A673 (cell line): ENCODE measurements at regions of chr15 and their contacts with region 1.

Region 1: DNA sequence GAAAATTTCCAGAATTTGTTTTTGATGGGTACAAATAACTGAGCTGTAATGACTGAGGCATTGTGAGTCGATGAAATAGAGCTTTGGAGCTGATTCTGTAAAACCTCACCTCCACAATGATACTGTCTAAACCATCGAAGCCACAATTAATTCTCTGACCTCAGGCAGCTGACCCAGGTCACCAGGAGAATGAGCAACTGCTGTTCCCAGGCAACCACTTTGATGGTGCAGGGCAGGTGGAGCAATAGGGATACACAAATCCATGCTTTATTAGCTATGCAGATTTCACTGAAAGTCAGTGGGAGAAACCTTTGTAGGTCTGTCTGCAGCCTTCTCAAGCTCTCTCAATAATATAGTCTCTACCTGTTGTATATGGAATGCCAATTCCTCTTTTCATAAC is 204.4 kb downstream of the RYR3 start:
- DNase-seq: no peak
- H3K4me3 ChIP-seq: no peak overlapping the region
- H3K27ac ChIP-seq: no peak overlapping the region
- H3K4me1 ChIP-seq: no peaks in the 10 kb centered on the region
- H3K27me3 ChIP-seq: peaks cover 50% of the 10 kb centered on the region
- CTCF ChIP-seq: no peak

Region 2: GRCh38 chr15:33467816-33468163 is 47.3 kb before region 1 on chr15:
- CTCF ChIA-PET with region 1: no interaction called
- POLR2A ChIA-PET with region 1: no interaction called
- intact Hi-C with region 1: loop called (anchors 5 kb)
- DNase-seq: no peak
- H3K4me3 ChIP-seq: no peak overlapping the region
- H3K27ac ChIP-seq: no peak overlapping the region
- H3K4me1 ChIP-seq: no peaks in the 10 kb centered on the region
- H3K27me3 ChIP-seq: no peaks in the 10 kb centered on the region
- CTCF ChIP-seq: no peak

Region 3: DNA sequence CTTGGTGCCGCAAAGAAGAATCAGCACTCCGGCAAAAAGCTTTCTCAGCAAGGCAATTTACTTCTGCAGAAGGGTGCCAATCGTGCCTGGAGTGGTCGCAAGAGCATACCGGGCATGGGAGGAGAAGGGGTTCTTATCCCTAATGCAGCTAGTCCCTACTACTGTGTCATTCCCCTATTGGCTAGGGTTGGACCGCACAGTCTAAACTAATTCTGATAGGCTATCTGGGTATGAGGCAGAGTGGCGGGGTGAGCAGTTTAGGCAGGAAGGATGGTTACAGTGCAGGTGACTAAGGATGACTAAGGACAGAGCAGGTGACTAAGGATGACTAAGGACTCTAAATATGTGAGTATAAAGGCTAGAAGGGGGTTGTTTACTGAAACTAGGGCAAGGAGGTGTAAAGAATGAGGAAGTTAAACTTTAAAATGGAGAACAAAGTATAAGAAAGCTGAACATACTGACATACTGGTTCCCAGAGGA is 639.6 kb after region 1 on chr15:
- CTCF ChIA-PET with region 1: no interaction called
- POLR2A ChIA-PET with region 1: no interaction called
- intact Hi-C with region 1: no loop called
- DNase-seq: no peak
- H3K4me3 ChIP-seq: no peak overlapping the region
- H3K27ac ChIP-seq: no peak overlapping the region
- H3K4me1 ChIP-seq: no peaks in the 10 kb centered on the region
- H3K27me3 ChIP-seq: no peaks in the 10 kb centered on the region
- CTCF ChIP-seq: no peak